ENCODE measurements at regions of chr22 and their contacts with region 1.

Region 1: GRCh38 chr22:22138915-22139314 is 105.7 kb upstream of the VPREB1 start:
- DNase-seq: no peak
- ATAC-seq: no peak
- H3K4me3 ChIP-seq: no peak overlapping the region
- H3K27ac ChIP-seq: no peak overlapping the region
- H3K4me1 ChIP-seq: no peaks in the 10 kb centered on the region
- H3K27me3 ChIP-seq: no peaks in the 10 kb centered on the region
- CTCF ChIP-seq: no peak
- EP300 ChIP-seq: no peak
- POLR2A ChIP-seq: no peak
- RAD21 ChIP-seq: no peak

Region 2: GRCh38 chr22:22123118-22123959 is 15.6 kb before region 1 on chr22:
- CTCF ChIA-PET with region 1: interaction called, 20 read pairs
- POLR2A ChIA-PET with region 1: interaction called, 3 read pairs
- RAD21 ChIA-PET with region 1: interaction called, 4 read pairs
- SMC1A ChIA-PET with region 1: interaction called, 61 read pairs
- in situ Hi-C with region 1: no loop called
- intact Hi-C with region 1: no loop called
- DNase-seq: no peak
- ATAC-seq: no peak
- H3K4me3 ChIP-seq: no peak overlapping the region
- H3K27ac ChIP-seq: no peak overlapping the region
- H3K4me1 ChIP-seq: no peaks in the 10 kb centered on the region
- H3K27me3 ChIP-seq: no peaks in the 10 kb centered on the region
- CTCF ChIP-seq: no peak
- EP300 ChIP-seq: no peak
- POLR2A ChIP-seq: no peak
- RAD21 ChIP-seq: no peak

Region 3: DNA sequence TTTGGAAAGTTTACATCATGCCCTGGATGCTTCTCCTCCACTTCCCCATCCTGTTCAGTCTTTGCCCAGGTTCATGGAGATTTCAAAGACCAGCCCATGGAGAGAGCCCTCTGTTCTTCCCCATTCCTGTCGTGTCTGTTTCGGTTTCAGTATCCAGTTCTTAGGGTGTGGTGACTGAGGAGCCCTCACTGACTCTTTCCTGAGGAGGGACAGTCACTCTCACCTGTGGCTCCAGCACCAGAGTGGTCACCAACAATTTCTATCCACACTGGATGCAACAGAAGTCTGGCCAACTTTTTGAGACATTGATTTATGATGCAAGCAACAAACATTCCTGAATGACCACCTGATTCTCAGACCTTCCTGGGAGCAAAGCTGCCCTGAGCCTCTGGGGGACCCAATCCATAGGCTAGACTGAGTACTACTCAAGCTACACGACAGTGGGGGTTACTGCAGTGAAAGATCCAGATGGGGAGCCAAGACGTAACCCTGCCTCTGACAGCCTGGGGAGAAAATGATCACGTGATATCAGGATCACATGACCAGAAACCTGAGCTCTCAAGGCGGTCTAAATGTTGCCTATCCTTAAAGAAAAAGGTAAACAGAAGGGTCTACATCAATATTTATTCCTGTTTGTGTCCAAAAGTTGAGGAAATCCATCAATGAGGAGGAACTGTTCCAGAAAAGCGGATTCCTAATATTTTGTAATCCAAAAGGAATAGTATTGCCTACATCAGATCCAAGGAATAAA is 29.4 kb after region 1 on chr22:
- CTCF ChIA-PET with region 1: interaction called, 3 read pairs
- POLR2A ChIA-PET with region 1: no interaction called
- RAD21 ChIA-PET with region 1: no interaction called
- SMC1A ChIA-PET with region 1: interaction called, 13 read pairs
- in situ Hi-C with region 1: no loop called
- intact Hi-C with region 1: no loop called
- DNase-seq: peak; percentile 57
- ATAC-seq: peak; percentile 74
- H3K4me3 ChIP-seq: peak overlapping the region; percentile 52; the same call in 1 of the 2 replicates
- H3K27ac ChIP-seq: peak overlapping the region; percentile 83
- H3K4me1 ChIP-seq: peaks cover 15% of the 10 kb centered on the region
- H3K27me3 ChIP-seq: no peaks in the 10 kb centered on the region
- CTCF ChIP-seq: no peak
- EP300 ChIP-seq: no peak
- POLR2A ChIP-seq: no peak; the same call in 1 of the 2 replicates
- RAD21 ChIP-seq: no peak

Region 4: DNA sequence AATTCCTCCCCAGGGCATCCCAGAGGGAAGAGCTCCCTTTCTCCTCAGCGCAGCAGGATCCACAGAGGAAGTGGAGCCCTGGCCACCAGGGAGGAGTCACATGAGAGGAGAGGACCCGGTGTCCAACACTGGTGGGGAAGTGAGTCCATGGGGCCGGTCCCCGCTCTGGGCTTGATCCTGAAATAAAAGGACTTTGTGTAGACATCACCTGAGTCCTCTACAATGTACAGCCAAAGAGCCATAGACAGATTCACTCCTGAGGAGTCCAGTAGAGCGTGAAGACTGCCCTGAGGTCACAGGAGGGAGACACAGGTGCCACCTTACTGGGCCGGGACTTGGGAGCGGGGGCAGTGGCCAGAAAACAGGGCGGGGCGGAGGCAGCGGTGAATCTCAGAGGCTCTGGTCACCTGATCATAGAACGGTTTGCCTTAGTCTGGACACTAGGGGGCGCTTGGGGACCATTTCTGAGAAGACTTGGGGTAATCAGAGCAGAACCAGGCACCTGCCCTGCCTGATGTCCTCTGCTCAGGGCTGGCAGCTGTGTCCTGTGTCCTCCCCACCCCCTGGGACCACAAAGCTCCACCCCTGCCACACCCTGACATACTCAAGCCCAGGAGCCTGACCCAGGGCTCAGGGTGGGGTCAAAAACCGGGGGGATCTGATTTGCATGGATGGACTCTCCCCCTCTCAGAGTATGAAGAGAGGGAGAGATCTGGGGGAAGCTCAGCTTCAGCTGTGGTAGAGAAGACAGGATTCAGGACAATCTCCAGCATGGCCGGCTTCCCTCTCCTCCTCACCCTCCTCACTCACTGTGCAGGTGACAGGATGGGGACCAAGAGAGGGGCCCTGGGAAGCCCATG is 218.3 kb after region 1 on chr22:
- CTCF ChIA-PET with region 1: no interaction called
- POLR2A ChIA-PET with region 1: no interaction called
- RAD21 ChIA-PET with region 1: no interaction called
- SMC1A ChIA-PET with region 1: no interaction called
- in situ Hi-C with region 1: no loop called
- intact Hi-C with region 1: no loop called
- DNase-seq: peak; percentile 34
- ATAC-seq: peak; percentile 100
- H3K4me3 ChIP-seq: no peak overlapping the region
- H3K27ac ChIP-seq: no peak overlapping the region
- H3K4me1 ChIP-seq: no peaks in the 10 kb centered on the region
- H3K27me3 ChIP-seq: no peaks in the 10 kb centered on the region
- CTCF ChIP-seq: peak; percentile 59 to 65 (median 62); a peak in 5 of 6 replicates
- EP300 ChIP-seq: no peak
- POLR2A ChIP-seq: no peak
- RAD21 ChIP-seq: peak; percentile 61

Region 5: DNA sequence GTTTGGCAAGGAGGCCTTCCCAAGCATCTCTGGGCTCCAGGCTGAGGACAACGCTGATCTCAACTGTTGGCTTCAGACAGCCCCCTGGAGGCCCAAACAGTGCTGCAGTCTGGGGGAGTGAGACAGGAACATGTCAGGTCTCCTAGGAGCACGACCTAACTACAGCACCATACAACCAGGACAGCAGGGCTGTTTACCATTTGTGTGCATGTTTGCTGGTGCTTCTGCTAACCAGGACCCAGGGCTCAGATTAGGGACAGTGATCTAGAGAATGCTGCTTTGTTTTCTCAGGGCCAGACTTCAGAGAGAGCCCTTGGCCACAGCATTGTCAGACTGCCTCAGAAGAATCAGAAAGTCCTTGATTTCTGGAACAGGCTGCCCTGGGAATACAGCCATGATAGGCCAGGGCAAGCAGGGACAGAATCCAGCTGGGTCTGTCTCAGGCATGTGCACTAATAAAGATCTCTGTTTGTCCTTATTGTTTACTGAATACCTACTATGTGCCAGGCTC is 232.2 kb after region 1 on chr22:
- CTCF ChIA-PET with region 1: no interaction called
- POLR2A ChIA-PET with region 1: no interaction called
- RAD21 ChIA-PET with region 1: no interaction called
- SMC1A ChIA-PET with region 1: no interaction called
- in situ Hi-C with region 1: no loop called
- intact Hi-C with region 1: no loop called
- DNase-seq: no peak
- ATAC-seq: peak; percentile 60
- H3K4me3 ChIP-seq: no peak overlapping the region
- H3K27ac ChIP-seq: no peak overlapping the region
- H3K4me1 ChIP-seq: peaks cover 4% of the 10 kb centered on the region; the same call in 1 of the 2 replicates
- H3K27me3 ChIP-seq: no peaks in the 10 kb centered on the region
- CTCF ChIP-seq: peak in 2 of 3 experiments; percentile 13 to 30; a peak in 1 of 6 replicates
- EP300 ChIP-seq: no peak
- POLR2A ChIP-seq: no peak
- RAD21 ChIP-seq: 0 out of 2 replicates have a peak, but pooled peaks have one; percentile 11

Measured in GM12878 (cell line).